CD14-positive monocyte (primary cell): ENCODE measurements at regions of chr7 and their contacts with region 1.

Region 1: DNA sequence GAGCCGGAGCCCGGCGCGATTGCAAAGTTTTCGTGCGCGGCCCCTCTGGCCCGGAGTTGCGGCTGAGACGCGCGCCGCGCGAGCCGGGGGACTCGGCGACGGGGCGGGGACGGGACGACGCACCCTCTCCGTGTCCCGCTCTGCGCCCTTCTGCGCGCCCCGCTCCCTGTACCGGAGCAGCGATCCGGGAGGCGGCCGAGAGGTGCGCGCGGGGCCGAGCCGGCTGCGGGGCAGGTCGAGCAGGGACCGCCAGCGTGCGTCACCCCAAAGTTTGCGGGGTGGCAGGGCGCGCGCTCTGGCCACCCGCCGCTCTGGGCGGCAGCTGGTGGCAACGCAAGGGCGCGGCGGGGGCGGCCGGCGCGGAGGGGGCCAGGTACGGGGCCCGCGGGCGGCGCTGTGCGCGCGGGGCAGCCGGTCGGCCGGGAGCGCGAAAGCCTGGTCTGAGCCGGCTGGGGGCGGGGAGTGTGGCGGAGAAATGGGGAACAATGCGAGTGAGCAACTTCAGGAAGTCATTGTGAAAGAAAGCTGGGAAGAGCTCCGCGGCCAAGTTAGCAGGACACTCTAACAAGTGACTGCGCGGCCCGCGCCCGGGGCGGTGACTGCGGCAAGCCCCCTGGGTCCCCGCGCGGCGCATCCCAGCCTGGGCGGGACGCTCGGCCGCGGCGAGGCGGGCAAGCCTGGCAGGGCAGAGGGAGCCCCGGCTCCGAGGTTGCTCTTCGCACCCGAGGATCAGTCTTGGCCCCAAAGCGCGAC is at the start of gene IKZF1:
- DNase-seq: peak; percentile 90 to 94 (median 94)
- H3K4me3 ChIP-seq: peak within 1 kb of the TSS; percentile 84 to 90 (median 87)
- H3K4me3 Mint-ChIP-seq: peak within 1 kb of the TSS; percentile 95 to 100
- H3K27ac ChIP-seq: peak within 1 kb of the TSS; percentile 72 to 92
- H3K27ac Mint-ChIP-seq: peak within 1 kb of the TSS; percentile 87 to 96 (median 92)
- H3K4me1 ChIP-seq: peaks cover 29 to 45% of the 10 kb centered on the region in 2 donors
- H3K4me1 Mint-ChIP-seq: peaks cover 50% of the 10 kb centered on the region
- H3K27me3 ChIP-seq: no peaks in the 10 kb centered on the region
- H3K27me3 Mint-ChIP-seq: peaks cover 1 to 7% (median 3%) of the 10 kb centered on the region in 3 donors
- CTCF ChIP-seq: no peak
- polyA plus RNA-seq, gene IKZF1: 38.4 to 130 (median 80.2) TPM

Region 2: GRCh38 chr7:50206453-50207250 is 97.7 kb before region 1 on chr7:
- intact Hi-C with region 1: loop called in 1 of 2 experiments (anchors 5 kb)
- DNase-seq: peak; percentile 74 to 82 (median 76)
- H3K4me3 ChIP-seq: peak overlapping the region in 1 of 3 experiments; percentile 54
- H3K4me3 Mint-ChIP-seq: peak overlapping the region; percentile 63 to 67
- H3K27ac ChIP-seq: peak overlapping the region; percentile 43 to 73
- H3K27ac Mint-ChIP-seq: peak overlapping the region; percentile 84 to 94 (median 92)
- H3K4me1 ChIP-seq: peaks cover 40 to 41% of the 10 kb centered on the region in 2 donors
- H3K4me1 Mint-ChIP-seq: peaks cover 53% of the 10 kb centered on the region
- H3K27me3 ChIP-seq: no peaks in the 10 kb centered on the region
- H3K27me3 Mint-ChIP-seq: peaks cover 0 to 11% (median 0%) of the 10 kb centered on the region in 3 donors
- CTCF ChIP-seq: no peak

Region 3: DNA sequence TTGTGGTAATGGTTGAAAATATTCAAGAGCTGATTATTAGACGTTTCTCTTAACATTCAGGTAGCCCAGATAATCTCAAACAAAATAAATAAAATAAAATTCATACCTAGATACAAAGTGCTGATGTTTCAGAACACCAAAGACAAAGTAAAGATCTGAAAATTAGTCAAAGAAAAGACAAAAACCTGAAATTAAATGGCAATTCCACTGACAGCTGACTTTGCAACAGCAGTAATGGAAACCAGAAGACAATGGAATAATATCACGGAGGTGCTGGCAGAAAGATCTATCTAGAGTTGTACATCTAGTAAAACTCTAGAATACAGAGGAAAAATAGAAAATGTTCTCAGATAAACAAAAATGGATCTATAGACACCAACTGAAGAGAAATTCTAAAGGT is 57.8 kb before region 1 on chr7:
- intact Hi-C with region 1: no loop called
- DNase-seq: no peak
- H3K4me3 ChIP-seq: no peak overlapping the region
- H3K4me3 Mint-ChIP-seq: no peak overlapping the region
- H3K27ac ChIP-seq: no peak overlapping the region
- H3K27ac Mint-ChIP-seq: no peak overlapping the region
- H3K4me1 ChIP-seq: no peaks in the 10 kb centered on the region
- H3K4me1 Mint-ChIP-seq: no peaks in the 10 kb centered on the region
- H3K27me3 ChIP-seq: no peaks in the 10 kb centered on the region
- H3K27me3 Mint-ChIP-seq: peaks cover 0 to 4% (median 0%) of the 10 kb centered on the region in 3 donors
- CTCF ChIP-seq: no peak

Region 4: DNA sequence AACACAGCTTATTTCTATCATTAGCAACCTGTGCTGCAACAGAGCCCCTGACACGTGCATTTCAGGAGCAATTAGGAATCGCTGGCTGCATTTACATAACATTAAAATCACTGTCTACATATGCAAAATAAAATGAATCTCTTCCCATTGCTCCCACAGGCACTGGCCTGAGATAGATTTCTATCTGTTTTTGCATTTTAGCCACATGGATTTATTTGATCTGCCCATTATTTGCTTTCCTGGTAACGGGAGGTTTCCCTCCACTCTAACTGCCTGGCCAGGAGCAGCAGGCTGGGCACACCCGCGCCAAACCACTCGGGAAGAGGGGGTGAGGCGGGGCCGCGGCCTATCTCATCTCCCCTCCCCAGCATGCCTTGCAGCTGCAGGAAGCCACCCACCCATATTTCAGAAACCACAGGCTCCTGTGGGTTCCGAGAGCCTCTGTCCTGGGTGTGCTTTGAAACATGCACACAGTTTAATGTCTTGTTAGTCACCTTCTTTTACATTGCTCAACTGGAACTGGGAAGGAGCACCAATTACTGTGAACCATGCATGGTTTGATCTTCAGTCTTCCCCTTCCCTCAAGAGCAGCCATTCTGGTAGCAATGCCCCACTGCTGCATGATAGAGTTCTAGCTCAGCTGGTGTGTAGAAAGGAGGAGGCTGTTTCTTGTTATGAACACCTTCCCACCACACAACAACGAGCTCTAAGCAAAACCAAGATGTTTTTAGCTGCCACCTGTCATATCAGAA is 37.5 kb before region 1 on chr7:
- intact Hi-C with region 1: loop called (anchors 5 kb)
- DNase-seq: peak; percentile 58 to 68 (median 63)
- H3K4me3 ChIP-seq: peak overlapping the region in 2 of 3 experiments; percentile 10 to 62
- H3K4me3 Mint-ChIP-seq: peak overlapping the region; percentile 65 to 75
- H3K27ac ChIP-seq: peak overlapping the region in 1 of 2 donors; percentile 69
- H3K27ac Mint-ChIP-seq: peak overlapping the region; percentile 1 to 83 (median 57)
- H3K4me1 ChIP-seq: peaks cover 75 to 81% of the 10 kb centered on the region in 2 donors
- H3K4me1 Mint-ChIP-seq: peaks cover 88% of the 10 kb centered on the region
- H3K27me3 ChIP-seq: no peaks in the 10 kb centered on the region
- H3K27me3 Mint-ChIP-seq: peaks cover 0 to 2% (median 0%) of the 10 kb centered on the region in 3 donors
- CTCF ChIP-seq: no peak

Region 5: GRCh38 chr7:50339990-50340500 is 35.7 kb after region 1 on chr7:
- intact Hi-C with region 1: loop called in 1 of 2 experiments (anchors 5 kb)
- DNase-seq: no peak
- H3K4me3 ChIP-seq: no peak overlapping the region
- H3K4me3 Mint-ChIP-seq: no peak overlapping the region
- H3K27ac ChIP-seq: peak overlapping the region; percentile 37 to 72
- H3K27ac Mint-ChIP-seq: peak overlapping the region; percentile 15 to 87 (median 76)
- H3K4me1 ChIP-seq: peaks cover 61 to 76% of the 10 kb centered on the region in 2 donors
- H3K4me1 Mint-ChIP-seq: peaks cover 80% of the 10 kb centered on the region
- H3K27me3 ChIP-seq: no peaks in the 10 kb centered on the region
- H3K27me3 Mint-ChIP-seq: no peaks in the 10 kb centered on the region
- CTCF ChIP-seq: no peak

Region 6: DNA sequence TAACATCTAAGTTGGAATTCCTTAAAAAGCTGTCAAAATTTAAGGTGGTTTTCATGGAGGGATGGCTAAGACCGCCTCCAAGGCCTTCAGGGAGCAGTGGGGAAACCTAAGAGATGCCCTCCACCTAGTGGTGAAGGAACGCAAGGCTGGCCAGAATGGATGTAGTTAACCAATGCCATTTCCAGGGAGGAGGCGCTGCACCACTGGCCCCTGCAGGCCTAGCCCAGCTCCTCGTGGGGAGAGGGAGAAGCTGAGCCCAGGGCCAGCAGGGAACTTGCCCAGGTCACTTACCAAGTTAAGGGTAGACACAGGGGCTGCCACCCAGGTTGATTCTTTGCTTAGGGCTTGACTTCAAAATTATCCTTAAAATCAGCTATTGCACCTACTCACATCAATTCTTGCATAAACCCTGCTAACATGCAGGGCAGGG is 113.8 kb after region 1 on chr7:
- intact Hi-C with region 1: loop called in 1 of 2 experiments (anchors 10 kb)
- DNase-seq: peak; percentile 60 to 79 (median 78)
- H3K4me3 ChIP-seq: no peak overlapping the region
- H3K4me3 Mint-ChIP-seq: no peak overlapping the region
- H3K27ac ChIP-seq: no peak overlapping the region
- H3K27ac Mint-ChIP-seq: peak overlapping the region in 1 of 7 donors; percentile 74
- H3K4me1 ChIP-seq: peaks cover 53 to 55% of the 10 kb centered on the region in 2 donors
- H3K4me1 Mint-ChIP-seq: peaks cover 54% of the 10 kb centered on the region
- H3K27me3 ChIP-seq: no peaks in the 10 kb centered on the region
- H3K27me3 Mint-ChIP-seq: peaks cover 0 to 3% (median 2%) of the 10 kb centered on the region in 3 donors
- CTCF ChIP-seq: peak; percentile 94